Activated CD8-positive, alpha-beta memory T cell treated with anti-CD3 and anti-CD28 coated beads, Interleukin-2, amount 10 ng/mL, durations not matched to agents 7 days and 5 days (primary cell): ENCODE measurements at regions of chr7 and their contacts with region 1.

Region 1: DNA sequence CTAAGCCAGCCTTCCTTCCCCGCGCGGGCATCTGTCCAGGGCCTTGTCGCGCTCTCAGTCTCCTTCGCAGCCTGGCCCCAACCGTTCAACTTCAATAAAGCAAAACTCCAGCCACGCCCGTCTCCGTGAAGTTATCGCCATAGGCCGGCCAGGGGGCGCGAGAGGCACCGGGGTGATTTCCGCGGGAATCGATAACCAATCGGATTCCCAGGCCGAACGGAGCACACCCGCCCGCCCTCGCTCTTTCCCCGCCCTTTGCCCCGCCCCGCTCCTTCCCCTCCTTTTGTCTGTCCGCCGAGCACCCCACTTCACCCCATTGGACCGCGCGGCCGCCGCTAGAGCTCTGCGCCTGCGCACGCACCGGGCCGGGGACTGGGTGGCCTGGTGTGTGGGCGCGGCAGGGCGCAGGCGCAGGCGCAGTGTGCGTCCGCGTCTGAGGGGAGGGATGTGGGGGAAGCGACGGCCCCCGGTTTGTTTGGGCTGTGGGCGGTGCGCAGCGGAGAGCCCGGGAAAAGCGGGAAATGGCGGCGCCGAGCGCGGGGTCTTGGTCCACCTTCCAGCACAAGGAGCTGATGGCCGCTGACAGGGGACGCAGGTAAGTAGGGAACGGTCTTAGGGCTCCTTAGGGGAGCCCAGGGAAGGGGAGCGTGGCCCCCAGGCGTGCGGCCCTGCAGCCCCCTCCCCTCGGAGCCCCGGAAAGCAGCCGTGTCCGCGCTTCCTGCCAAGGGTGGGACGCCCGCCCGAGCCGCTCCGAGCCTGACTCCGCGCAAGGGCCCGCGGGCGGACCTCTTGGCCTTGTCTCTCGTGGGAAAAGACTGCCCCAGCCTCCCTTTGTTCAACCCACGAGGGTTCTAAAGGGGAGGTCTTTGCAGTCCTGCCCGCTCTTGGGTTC is at the start of gene CASP2:
- DNase-seq: peak; percentile 99
- ATAC-seq: peak; percentile 95
- H3K4me3 Mint-ChIP-seq: peak within 1 kb of the TSS; percentile 96
- H3K27ac Mint-ChIP-seq: peak within 1 kb of the TSS; percentile 93
- H3K4me1 Mint-ChIP-seq: peaks cover 54% of the 10 kb centered on the region
- H3K27me3 Mint-ChIP-seq: no peaks in the 10 kb centered on the region
- total RNA-seq, gene CASP2: 117 to 129 TPM

Region 2: GRCh38 chr7:143096146-143096545 is 192.0 kb before region 1 on chr7:
- CTCF ChIA-PET with region 1: no interaction called
- DNase-seq: no peak
- ATAC-seq: no peak
- H3K4me3 Mint-ChIP-seq: no peak overlapping the region
- H3K27ac Mint-ChIP-seq: no peak overlapping the region
- H3K4me1 Mint-ChIP-seq: no peaks in the 10 kb centered on the region
- H3K27me3 Mint-ChIP-seq: no peaks in the 10 kb centered on the region

Region 3: DNA sequence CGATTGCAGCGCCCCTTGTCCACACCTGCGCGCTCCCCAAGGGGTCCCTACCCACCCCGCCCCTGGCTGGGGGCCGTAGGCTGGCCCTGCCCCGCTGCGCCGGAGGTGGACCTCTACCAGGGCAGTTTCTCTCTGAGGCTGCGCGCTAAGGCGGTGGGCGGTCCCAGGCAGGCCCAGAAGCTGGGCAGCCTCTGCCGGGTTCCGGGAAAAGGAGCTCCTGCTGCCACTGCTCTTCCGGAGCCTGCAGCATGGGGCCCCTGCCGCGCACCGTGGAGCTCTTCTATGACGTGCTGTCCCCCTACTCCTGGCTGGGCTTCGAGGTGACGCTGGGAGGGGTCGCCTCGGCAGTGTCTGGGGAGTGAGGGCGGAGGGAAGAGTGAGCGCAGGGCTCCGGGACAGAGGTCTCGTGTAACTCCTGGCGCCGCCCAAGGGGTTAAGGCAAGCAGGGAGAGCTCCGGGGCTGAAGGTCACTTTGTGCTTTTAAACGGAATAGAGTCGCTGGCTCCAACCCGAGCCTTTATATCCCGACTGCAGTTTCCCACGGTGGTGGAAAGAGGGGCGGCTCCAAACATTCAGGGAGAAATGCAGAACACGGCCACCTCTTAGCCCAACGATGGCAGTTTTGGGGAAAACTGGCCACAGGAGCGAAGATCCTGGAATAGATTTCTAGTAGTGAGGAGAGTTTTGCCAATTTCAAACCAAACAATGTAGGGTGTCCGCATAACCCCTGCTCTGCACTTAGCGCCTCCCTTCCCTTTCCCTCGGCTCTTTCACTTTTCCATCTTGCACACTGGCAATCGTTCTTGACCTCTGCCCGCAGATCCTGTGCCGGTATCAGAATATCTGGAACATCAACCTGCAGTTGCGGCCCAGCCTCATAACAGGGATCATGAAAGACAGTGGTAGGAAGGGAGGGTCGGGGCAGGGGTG is 24.6 kb before region 1 on chr7 and contains the start of gene GSTK1:
- CTCF ChIA-PET with region 1: interaction called, 18 read pairs
- DNase-seq: peak; percentile 88
- ATAC-seq: peak; percentile 98
- H3K4me3 Mint-ChIP-seq: peak within 1 kb of the TSS; percentile 99
- H3K27ac Mint-ChIP-seq: peak within 1 kb of the TSS; percentile 93
- H3K4me1 Mint-ChIP-seq: peaks cover 62% of the 10 kb centered on the region
- H3K27me3 Mint-ChIP-seq: no peaks in the 10 kb centered on the region
- total RNA-seq, gene GSTK1: 335 to 436 TPM

Region 4: GRCh38 chr7:143299840-143300239 is 11.7 kb after region 1 on chr7:
- CTCF ChIA-PET with region 1: interaction called, 93 read pairs
- DNase-seq: peak; percentile 70
- ATAC-seq: peak; percentile 88
- H3K4me3 Mint-ChIP-seq: no peak overlapping the region
- H3K27ac Mint-ChIP-seq: peak overlapping the region; percentile 25
- H3K4me1 Mint-ChIP-seq: peaks cover 45% of the 10 kb centered on the region
- H3K27me3 Mint-ChIP-seq: no peaks in the 10 kb centered on the region

Region 5: DNA sequence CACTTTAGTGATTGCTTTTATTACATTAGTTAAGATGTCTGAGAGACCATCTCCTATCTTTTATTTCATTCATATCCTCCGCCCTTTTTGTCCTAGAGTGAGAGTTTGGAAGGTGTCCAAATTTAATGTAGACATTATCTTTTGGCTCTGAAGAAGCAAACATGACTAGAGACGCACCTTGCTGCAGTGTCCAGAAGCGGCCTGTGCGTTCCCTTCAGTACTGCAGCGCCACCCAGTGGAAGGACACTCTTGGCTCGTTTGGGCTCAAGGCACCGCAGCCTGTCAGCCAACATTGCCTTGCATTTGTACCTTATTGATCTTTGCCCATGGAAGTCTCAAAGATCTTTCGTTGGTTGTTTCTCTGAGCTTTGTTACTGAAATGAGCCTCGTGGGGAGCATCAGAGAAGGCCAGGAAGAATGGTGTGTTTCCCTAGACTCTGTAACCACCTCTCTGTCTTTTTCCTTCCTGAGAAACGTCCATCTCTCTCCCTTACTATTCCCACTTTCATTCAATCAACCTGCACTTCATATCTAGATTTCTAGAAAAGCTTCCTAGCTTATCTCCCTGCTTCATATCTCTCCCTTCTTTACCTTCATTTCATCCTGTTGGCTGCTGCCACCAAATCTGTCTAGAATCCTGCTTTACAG is 17.4 kb after region 1 on chr7:
- CTCF ChIA-PET with region 1: interaction called, 93 read pairs
- DNase-seq: peak; percentile 77
- ATAC-seq: peak; percentile 70
- H3K4me3 Mint-ChIP-seq: no peak overlapping the region
- H3K27ac Mint-ChIP-seq: peak overlapping the region; percentile 61
- H3K4me1 Mint-ChIP-seq: peaks cover 53% of the 10 kb centered on the region
- H3K27me3 Mint-ChIP-seq: no peaks in the 10 kb centered on the region